Sciatic nerve (tissue), 2 donors: ENCODE measurements at regions of chr13 and their contacts with region 1.

Region 1: DNA sequence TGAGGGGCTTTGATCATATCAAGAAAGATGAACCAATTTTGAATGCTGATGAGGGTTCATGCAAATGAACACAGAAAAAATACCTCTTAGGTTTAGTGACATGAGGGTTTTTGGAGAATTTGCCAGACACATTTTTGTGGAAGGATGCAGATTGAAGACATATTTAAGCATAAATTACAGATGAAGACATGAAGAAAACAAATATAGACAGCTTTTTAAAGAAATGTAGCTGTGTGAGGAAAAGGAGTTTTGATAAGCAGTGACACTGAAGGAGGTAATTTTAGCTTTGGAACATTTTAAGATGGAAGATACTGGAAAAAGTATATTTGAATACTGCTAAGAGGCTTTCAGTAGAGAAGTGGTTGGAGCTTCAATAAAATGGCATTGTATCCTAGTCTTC is 810.8 kb upstream of the GPC6 start:
- DNase-seq: no peak
- ATAC-seq: no peak

Region 2: DNA sequence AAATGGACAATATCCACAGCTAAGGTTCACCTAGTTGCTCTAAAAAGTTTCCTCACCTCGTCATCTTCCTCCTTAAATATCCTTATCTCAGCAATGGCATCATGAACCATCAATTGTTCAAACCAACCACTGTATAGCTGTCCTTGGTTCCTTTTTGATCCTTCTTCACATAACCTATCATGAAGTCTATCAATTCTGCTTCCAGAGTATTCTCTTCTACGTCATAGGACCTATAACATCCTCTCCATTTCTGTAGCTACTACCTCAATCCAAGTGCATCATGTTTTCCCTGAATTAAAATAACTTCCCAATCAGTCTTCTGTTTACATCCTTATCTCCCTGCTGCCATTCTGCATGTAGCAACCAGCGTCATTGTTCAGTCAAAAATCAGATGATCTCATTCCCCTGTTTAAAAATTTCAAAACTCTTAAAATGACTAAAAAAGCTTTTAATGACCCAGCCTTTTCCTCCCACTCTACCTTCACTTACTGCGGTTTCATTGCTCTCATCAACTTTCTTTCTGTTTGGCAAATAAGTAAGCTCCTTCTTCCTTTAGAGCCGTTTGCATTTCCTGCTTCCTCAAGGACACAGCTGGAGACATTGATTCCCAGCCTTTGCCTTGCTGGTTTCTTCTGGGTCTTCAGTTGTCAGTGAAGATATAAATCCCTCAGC is 1292.2 kb before region 1 on chr13:
- intact Hi-C with region 1: no loop called
- DNase-seq: no peak
- ATAC-seq: no peak

Region 3: GRCh38 chr13:92483894-92484293 is 68.1 kb after region 1 on chr13:
- intact Hi-C with region 1: loop called (anchors 2 kb)
- DNase-seq: no peak
- ATAC-seq: no peak

Region 4: DNA sequence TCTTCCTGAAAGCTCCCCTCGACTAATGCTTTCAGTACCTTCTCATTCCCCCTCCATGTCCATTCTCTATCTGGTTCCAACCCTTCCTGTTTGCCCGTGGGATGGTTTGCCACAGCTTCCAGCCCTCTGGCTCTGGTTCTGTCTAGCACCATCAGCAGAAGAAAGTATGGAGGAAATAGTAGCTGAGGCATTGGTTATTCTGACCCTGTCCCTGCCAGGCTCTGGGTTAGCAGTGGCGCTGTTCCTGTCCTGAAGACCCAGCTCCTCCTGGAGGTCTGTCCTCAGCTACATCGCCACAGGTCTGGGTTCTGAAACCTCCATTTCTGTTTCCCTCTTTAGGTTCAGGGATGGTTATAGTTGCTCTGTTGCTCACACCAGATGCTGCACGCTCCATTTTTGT is 206.2 kb after region 1 on chr13:
- intact Hi-C with region 1: no loop called
- DNase-seq: no peak
- ATAC-seq: no peak